Heart left ventricle (tissue), 16 donors: ENCODE measurements at regions of chr3 and their contacts with region 1.

Region 1: DNA sequence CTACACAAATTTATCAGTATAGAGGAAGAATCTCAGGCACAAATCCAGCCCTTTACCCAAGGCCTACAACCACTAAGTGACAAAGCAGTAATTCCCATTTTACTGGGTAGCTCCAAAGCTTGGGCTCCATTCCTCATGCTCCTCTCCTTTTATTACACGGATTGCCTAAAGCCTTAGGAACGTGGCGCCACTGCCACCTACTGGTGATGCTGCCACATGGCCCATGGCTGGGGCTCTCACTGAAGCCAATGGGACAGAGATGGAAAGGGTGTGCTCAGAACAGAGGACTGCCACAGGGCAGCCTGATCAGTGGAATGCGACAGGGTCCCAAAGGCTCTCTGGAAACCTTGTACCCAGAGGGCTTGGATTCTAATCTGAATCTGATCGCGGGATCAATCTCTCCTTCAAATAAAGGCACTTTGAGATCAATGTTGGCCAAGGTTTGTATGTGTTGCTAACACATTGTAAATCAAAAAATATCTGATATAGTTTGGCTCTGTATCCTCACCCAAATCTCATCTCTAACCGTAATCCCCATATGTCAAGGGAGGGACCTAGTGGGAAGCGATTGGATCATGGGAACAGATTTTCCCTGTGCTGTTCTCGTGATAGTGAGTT is 33.5 kb upstream of the LYZL4 start:
- DNase-seq: peak; percentile 74 to 90 (median 82)
- ATAC-seq: peak; percentile 86 to 97 (median 95)
- H3K4me3 ChIP-seq: no peak overlapping the region
- H3K27ac ChIP-seq: no peak overlapping the region
- H3K4me1 ChIP-seq: no peaks in the 10 kb centered on the region
- H3K27me3 ChIP-seq: peaks cover 0 to 5% (median 2%) of the 10 kb centered on the region in 9 donors
- CTCF ChIP-seq: peak; percentile 92 to 99 (median 96)
- POLR2A ChIP-seq: no peak

Region 2: DNA sequence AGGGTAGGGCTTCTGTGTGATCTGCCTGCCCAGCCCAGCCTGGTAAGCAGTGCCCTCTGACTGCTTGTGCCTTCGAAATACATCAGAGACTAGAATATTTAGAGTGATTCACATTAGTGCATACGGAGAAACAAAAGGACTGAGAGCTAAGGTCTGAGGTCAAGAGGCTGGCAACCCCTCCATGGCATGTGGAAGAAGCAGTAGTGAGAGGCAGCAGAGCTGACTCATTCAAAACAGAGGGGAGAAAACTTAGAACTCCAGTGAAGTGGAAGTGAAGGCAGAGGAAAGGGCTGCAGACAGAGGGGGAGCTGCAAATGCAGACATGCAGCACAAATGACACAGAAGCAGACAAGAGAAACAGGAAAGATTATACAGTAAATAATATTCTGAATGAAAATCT is 543.7 kb before region 1 on chr3:
- intact Hi-C with region 1: loop called in 8 of 10 experiments (anchors 2 to 10 kb)
- DNase-seq: no peak
- ATAC-seq: no peak
- H3K4me3 ChIP-seq: no peak overlapping the region
- H3K27ac ChIP-seq: no peak overlapping the region
- H3K4me1 ChIP-seq: peaks cover 0 to 8% (median 0%) of the 10 kb centered on the region in 12 donors
- H3K27me3 ChIP-seq: no peaks in the 10 kb centered on the region
- CTCF ChIP-seq: no peak
- POLR2A ChIP-seq: no peak

Region 3: DNA sequence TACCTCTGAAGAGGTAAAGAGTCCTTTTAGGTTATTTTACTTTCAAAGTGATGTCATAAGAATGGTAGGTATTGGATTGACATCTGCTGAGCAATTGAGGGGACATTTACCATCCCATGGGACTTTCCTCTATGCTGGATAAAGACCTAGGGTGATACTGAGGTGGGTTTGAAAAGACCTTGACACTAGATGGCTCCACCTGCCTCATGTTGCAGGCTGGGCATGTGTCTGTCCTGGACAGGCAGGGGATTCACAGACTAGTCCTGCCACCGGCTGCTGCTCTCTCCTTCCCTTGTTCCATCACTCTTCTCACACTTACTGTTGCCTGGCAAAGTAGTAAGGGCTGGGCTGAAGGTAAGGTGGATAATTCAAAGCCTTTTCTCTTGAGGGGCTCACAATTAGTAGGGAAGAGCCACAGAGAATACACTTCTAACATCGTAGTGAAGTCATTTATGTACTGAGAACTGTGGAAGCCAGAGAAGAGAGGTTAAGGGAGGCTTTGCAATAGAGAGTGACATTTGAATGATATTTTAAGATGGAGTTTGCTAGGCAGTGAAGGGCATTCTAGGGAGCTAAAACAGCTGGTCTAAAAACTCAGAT is 325.1 kb before region 1 on chr3:
- intact Hi-C with region 1: loop called in 6 of 10 experiments (anchors 5 to 10 kb)
- DNase-seq: peak in 2 of 5 donors; percentile 14 to 54
- ATAC-seq: peak; percentile 59 to 64 (median 60)
- H3K4me3 ChIP-seq: no peak overlapping the region
- H3K27ac ChIP-seq: peak overlapping the region in 7 of 12 donors; percentile 2 to 49 (median 27)
- H3K4me1 ChIP-seq: peaks cover 8 to 93% (median 79%) of the 10 kb centered on the region in 12 donors
- H3K27me3 ChIP-seq: no peaks in the 10 kb centered on the region
- CTCF ChIP-seq: peak in 10 of 12 donors; percentile 20 to 55 (median 40)
- POLR2A ChIP-seq: no peak

Region 4: DNA sequence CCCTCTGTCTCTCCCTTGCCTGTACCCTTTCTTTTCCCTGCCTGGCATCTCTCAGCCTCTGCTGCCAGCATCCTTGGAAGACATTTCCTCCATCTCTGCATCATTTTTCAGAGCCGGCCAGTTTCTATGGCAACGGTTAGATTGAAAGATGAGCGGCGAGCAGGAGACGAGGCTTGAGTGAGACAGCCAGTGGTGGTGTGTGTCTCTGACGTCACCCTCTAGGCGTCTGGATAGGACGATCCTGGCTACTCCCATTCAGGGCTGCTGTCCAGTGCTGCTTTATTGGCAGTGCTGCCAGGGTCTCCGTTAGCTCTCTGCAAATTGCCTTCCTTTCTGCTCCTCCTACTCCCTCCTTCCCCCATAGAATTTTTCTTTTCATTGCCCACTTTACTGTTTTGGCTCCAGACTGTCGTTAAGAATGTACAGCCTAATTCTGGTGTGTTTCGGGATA is 294.9 kb before region 1 on chr3:
- intact Hi-C with region 1: no loop called
- DNase-seq: peak; percentile 67 to 83 (median 72)
- ATAC-seq: peak; percentile 89 to 98 (median 97)
- H3K4me3 ChIP-seq: no peak overlapping the region
- H3K27ac ChIP-seq: peak overlapping the region in 1 of 12 donors; percentile 28
- H3K4me1 ChIP-seq: peaks cover 0 to 55% (median 34%) of the 10 kb centered on the region in 12 donors
- H3K27me3 ChIP-seq: no peaks in the 10 kb centered on the region
- CTCF ChIP-seq: no peak
- POLR2A ChIP-seq: no peak

Region 5: DNA sequence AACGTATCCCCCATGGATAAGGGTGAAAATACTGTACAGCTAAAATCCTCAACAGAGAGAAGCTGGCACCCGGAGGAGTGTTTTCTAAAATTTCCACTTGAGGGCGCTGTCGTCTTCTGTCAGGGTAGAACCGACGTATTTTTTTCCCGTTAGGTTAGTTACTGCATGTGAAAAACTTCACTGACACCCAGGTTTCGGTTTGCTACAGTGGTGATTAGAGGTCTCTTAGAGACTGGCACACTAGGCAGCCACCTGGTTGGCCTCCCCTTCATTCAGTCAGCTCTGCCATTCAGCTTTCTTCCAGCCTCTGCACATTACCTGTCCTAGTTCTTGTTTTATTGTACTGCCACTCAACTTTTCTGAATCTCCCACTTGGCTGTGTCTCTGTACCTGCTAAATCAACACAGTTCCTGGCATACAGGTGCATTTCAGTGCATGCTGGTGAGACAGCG is 196.3 kb before region 1 on chr3:
- intact Hi-C with region 1: loop called in 9 of 10 experiments (anchors 1 to 5 kb)
- DNase-seq: peak in 1 of 5 donors; percentile 41
- ATAC-seq: peak in 3 of 4 donors; percentile 45 to 58 (median 47)
- H3K4me3 ChIP-seq: no peak overlapping the region
- H3K27ac ChIP-seq: no peak overlapping the region
- H3K4me1 ChIP-seq: no peaks in the 10 kb centered on the region
- H3K27me3 ChIP-seq: peaks cover 0 to 8% (median 3%) of the 10 kb centered on the region in 9 donors
- CTCF ChIP-seq: peak; percentile 62 to 81 (median 70)
- POLR2A ChIP-seq: no peak

Region 6: GRCh38 chr3:42539869-42540714 is 96.2 kb after region 1 on chr3:
- intact Hi-C with region 1: loop called in 3 of 10 experiments (anchors 5 kb)
- DNase-seq: peak in 2 of 5 donors; percentile 51 to 56
- ATAC-seq: peak in 3 of 4 donors; percentile 26 to 50 (median 31)
- H3K4me3 ChIP-seq: no peak overlapping the region
- H3K27ac ChIP-seq: no peak overlapping the region
- H3K4me1 ChIP-seq: peaks cover 0 to 28% (median 12%) of the 10 kb centered on the region in 12 donors
- H3K27me3 ChIP-seq: no peaks in the 10 kb centered on the region
- CTCF ChIP-seq: peak; percentile 57 to 77 (median 68)
- POLR2A ChIP-seq: no peak